Activated T-helper 2 cell treated with anti-CD3 and anti-CD28 coated beads, Interferon-gamma antibody, Interleukin-2, Interleukin-4, amounts not matched to agents 10 μg/mL and 5 μg/mL and 100 μg/mL, durations not matched to agents 14 hours and 24 hours and 36 hours (primary cell): ENCODE measurements at regions of chr6 and their contacts with region 1.

Region 1: DNA sequence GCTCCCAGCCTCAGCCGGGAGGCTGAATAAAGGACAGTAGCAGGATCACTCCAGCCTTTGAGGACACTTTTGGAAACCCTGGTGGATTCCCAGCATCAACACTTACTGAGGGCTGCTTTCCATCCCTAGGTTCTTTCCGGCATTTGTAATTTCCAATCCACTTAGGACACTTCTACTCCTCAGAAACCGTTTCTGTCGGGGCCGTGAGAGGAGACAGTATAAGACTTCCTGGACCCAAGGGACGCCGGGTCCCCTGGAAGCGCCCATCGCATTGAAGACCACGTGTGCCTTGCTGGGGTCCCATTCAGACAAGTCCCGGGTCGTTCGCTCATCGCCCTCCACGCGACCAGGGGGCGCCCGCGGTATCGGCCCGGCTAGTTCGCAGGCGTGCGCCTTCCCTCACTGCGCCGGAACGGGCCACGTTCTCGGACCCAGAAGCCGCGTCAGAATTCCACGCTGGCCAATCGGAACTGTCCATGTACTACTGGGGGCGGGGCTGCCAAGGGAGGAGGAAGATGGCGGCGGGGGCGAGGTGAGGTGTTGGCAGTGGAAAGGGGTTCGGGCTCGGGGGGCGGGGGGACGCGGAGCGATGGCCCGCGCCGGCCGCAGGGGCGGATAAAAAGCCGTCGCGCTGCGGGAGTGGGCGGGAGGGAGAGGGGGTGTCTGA is at the start of gene NUS1:
- DNase-seq: peak; percentile 96
- H3K4me3 Mint-ChIP-seq: peak within 1 kb of the TSS; percentile 89
- H3K27ac Mint-ChIP-seq: peak within 1 kb of the TSS; percentile 91
- H3K4me1 Mint-ChIP-seq: peaks cover 35% of the 10 kb centered on the region
- H3K27me3 Mint-ChIP-seq: no peaks in the 10 kb centered on the region
- total RNA-seq, gene NUS1: 44.2 and 44.6 TPM in 2 replicates

Region 2: GRCh38 chr6:117482240-117483003 is 192.7 kb before region 1 on chr6 and contains the start of gene DCBLD1:
- intact Hi-C with region 1: loop called (anchors 2 kb)
- DNase-seq: peak; percentile 56
- H3K4me3 Mint-ChIP-seq: peak within 1 kb of the TSS; percentile 86
- H3K27ac Mint-ChIP-seq: peak within 1 kb of the TSS; percentile 72
- H3K4me1 Mint-ChIP-seq: peaks cover 14% of the 10 kb centered on the region
- H3K27me3 Mint-ChIP-seq: peaks cover 47% of the 10 kb centered on the region
- total RNA-seq, gene DCBLD1: 4.0 and 7.5 TPM in 2 replicates

Region 3: DNA sequence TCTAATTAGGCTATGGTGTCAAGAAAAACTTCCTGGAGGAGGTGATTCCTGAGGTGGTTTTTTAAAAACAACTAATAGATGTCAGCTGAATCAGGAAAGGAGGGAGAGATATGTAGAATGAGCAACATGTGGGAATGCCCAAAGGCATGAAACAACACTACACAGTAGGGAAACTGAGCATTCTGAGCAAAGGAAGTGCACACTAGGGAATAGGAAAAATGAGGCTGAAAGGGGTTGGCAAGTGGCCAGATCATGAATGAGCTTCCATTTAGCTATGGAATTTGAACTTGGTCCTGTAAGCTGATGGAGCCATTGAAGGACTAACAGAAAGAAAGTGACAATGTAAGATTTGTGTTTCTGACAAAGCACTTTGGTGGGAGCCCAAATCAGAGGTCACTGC is 215.0 kb after region 1 on chr6:
- intact Hi-C with region 1: no loop called
- DNase-seq: no peak
- H3K4me3 Mint-ChIP-seq: no peak overlapping the region
- H3K27ac Mint-ChIP-seq: no peak overlapping the region
- H3K4me1 Mint-ChIP-seq: no peaks in the 10 kb centered on the region
- H3K27me3 Mint-ChIP-seq: no peaks in the 10 kb centered on the region